A549 (cell line): ENCODE measurements at regions of chr6 and their contacts with region 1.

Region 1: DNA sequence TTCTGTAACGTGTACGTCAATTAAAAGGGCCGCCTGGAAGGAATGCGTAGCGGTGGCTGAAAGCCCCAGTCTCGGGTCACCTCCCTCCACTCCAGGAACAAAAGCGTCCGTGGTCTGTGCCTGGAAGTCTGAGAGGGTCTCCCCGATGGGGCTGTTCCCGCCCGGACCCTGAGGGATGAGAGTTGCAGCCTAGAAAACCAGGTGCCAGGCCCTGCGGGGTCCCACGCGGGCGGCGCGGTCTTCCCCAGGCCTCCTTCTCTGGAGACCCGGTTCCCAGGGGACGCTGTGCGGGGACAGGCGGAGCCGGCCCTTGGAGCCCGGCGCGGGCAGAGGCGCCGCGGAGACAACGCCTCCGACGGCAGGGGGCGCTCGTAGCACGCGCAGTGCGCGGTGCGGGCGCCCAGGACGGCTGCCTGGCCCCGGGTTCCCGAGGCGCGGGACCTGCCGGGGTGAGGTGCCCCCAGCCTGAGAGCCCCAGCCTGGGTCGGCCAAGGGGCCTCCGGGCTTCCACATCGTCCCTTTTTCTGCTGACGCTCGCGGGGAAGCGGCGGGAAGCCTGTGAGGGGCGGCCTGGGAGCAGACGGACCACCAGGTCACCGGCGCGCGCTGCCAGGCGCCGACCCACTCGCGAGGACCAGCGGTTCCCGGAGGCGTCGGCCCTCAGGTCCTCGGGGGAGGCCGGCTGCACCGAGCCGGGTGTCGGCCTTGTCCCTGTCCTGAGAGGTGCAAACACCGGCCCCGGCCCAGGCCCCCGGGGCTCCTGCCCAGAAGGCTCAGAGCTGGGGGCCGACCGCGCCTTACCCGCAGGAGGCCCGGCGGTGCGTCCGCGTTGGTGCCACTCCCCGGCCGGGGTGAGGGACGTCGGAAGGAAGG is 5.3 kb upstream of the FOXC1 start:
- DNase-seq: peak in 1 of 2 experiments; percentile 52
- ATAC-seq: peak; percentile 88 to 98
- H3K4me3 ChIP-seq: peak overlapping the region; percentile 54
- H3K27ac ChIP-seq: peak overlapping the region; percentile 69 to 85; a peak in 5 of 6 replicates
- H3K4me1 ChIP-seq: no peaks in the 10 kb centered on the region
- CTCF ChIP-seq: peak; percentile 89
- EP300 ChIP-seq: no peak
- POLR2A ChIP-seq: no peak
- RAD21 ChIP-seq: peak; percentile 72 to 98

Region 2: DNA sequence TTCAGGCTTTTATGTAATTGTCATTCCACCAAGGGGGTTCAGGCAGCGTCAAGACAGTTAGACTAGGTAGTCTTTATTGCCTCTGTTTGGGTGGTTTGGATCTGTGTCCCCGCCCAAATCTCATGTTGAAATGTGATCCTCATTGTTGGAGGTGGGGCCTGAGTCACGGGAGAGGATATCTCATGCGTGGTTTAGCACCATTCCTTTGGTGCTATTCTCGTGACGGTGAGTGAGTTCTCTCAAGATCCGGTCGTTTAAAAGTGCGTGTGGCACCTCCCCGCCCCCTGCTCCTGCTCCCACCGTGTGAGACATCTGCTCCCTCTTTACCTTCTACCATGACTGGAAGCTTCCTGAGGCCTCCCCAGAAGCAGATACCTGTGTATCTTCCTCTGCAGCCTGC is 46.0 kb before region 1 on chr6:
- CTCF ChIA-PET with region 1: no interaction called
- POLR2A ChIA-PET with region 1: no interaction called
- DNase-seq: no peak
- ATAC-seq: no peak
- H3K4me3 ChIP-seq: no peak overlapping the region
- H3K27ac ChIP-seq: no peak overlapping the region
- H3K4me1 ChIP-seq: 0 out of 3 replicates have a peak, but pooled peaks cover 6% of the 10 kb centered on the region
- CTCF ChIP-seq: no peak
- EP300 ChIP-seq: no peak
- POLR2A ChIP-seq: no peak
- RAD21 ChIP-seq: no peak

Region 3: GRCh38 chr6:1589208-1589607 is 15.2 kb before region 1 on chr6:
- CTCF ChIA-PET with region 1: no interaction called
- POLR2A ChIA-PET with region 1: no interaction called
- DNase-seq: no peak
- ATAC-seq: no peak
- H3K4me3 ChIP-seq: no peak overlapping the region
- H3K27ac ChIP-seq: no peak overlapping the region
- H3K4me1 ChIP-seq: no peaks in the 10 kb centered on the region
- CTCF ChIP-seq: no peak
- EP300 ChIP-seq: no peak
- POLR2A ChIP-seq: no peak
- RAD21 ChIP-seq: no peak

Region 4: DNA sequence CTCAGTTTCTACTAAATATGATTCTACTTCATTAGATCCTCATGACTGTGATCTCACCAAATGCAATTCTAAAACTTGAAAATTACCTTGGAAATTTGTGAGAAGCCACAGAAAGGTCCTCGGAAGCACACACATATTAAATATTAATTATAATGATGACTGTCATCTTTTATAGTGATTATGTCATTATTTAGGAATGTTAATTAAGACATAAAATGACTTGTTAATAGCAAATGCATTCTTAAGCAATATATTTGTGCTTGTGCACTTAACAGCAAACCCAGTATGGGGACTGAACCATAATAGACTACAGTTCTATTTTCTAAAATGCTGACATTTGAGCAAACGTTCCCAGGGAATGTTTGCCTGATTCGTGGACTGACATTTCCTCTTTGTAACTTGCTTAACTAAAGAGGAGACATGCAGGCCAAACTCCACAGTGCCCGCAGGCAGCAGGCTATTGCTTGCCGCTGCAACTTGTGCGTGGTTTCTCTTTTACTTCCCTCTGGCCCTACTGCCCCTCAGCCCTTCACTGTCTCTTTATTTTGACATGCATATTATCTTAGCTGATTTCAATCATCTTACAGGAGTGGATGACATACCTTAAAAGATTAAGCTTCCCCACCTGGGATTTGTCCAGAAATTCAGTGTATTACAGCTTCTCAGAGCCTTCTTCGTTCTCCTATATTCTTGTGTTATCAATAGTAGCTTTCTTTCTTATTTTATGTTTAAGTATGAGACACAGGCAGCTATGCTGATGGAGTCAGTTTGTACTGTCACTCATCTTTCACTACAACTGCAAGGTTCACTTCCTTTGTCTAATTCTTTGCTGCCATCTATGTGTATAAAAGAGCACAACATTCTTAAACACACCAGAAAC is 499.5 kb after region 1 on chr6:
- CTCF ChIA-PET with region 1: interaction called, 23 read pairs
- POLR2A ChIA-PET with region 1: interaction called, 10 read pairs
- DNase-seq: peak; percentile 33 to 59
- ATAC-seq: peak; percentile 93 to 97
- H3K4me3 ChIP-seq: 0 out of 3 replicates have a peak overlapping the region, but pooled peaks have one; percentile 13
- H3K27ac ChIP-seq: 0 out of 6 replicates have a peak overlapping the region, but pooled peaks have one; percentile 14 to 29
- H3K4me1 ChIP-seq: peaks cover 25% of the 10 kb centered on the region
- CTCF ChIP-seq: peak; percentile 58
- EP300 ChIP-seq: no peak
- POLR2A ChIP-seq: no peak
- RAD21 ChIP-seq: peak; percentile 78

Region 5: DNA sequence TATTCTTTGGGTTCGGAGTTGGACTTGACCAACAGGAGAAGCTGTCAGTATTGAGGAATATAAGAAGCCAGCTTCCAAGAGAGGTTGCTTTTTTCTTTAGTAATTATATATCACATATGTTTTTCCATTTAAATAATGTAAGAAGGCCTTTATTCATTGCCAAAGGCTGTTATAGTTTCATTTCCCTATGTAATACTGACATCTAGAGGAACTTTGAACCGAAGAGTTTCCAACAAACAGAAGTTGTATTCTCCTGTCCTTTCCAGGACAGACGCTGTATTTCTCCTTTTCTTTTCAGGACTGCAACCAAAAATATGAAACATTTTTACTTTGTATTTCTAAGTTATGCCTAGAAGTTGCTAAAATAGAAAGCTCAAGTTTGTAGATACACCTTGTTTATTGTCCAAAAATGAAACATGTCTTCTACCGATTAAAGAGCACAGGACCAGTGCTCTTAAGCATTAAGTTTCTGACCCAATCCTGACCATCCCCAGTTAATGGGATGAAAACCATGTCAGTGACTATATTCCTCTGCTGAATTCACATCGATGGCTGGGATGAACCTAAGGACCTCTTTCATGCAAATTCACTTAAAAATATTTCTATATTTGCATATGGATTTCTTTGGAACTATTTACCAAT is 1091.2 kb after region 1 on chr6:
- CTCF ChIA-PET with region 1: interaction called, 16 read pairs
- POLR2A ChIA-PET with region 1: no interaction called
- DNase-seq: peak in 1 of 2 experiments; percentile 10
- ATAC-seq: peak; percentile 59 to 61; a peak in 3 of 6 replicates
- H3K4me3 ChIP-seq: no peak overlapping the region
- H3K27ac ChIP-seq: no peak overlapping the region
- H3K4me1 ChIP-seq: no peaks in the 10 kb centered on the region
- CTCF ChIP-seq: peak; percentile 63
- EP300 ChIP-seq: no peak
- POLR2A ChIP-seq: no peak
- RAD21 ChIP-seq: peak; percentile 67 to 71